ENCODE measurements at regions of chr3 and their contacts with region 1.

Region 1: DNA sequence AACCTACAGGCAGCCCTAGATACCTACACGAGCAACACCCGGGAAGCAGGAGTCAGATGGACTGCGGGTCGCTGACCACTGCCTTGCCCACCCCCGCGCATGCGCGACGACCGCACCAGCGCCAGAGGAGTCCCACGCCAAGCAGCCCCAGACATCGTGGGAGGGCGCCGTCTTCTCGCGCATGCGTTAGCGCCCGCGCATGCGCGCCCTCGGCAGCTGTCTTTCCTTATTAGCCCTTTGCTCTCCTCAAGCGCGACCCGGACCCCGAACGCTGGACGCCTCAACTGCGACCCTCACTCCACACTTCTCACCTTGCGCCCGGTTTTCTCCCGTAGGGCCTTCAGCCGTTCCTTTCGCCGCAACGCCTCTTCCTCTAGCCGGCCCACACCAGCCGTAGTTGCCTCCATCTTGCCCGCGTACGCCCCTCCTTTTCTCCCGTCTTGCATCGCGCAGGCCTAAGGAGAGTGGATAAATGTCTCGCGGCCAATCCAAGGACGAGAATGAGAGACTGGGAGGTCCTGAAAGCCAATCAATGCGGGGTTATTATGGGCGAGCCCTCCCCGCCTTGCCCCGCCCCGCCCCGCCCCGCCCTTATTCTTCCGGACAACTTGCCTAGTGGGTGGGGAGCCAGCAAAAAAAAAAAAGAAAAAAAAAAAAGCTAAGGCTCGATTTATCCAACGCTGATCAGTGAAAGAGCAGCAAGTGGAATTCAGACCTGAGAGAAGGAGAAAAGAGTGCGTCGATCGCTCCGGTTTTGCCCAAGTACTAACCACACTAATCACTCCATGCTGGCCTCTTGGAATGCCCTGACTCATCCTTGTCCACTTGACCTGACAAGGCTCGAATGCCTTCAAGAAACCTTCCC is at the start of gene CCDC12:
- DNase-seq: peak; percentile 94
- H3K4me3 Mint-ChIP-seq: peak within 1 kb of the TSS; percentile 97
- H3K27ac Mint-ChIP-seq: peak within 1 kb of the TSS; percentile 98
- H3K4me1 Mint-ChIP-seq: peaks cover 44% of the 10 kb centered on the region
- H3K27me3 Mint-ChIP-seq: no peaks in the 10 kb centered on the region
- total RNA-seq, gene CCDC12: 65.3 and 69.2 TPM in 2 replicates

Region 2: GRCh38 chr3:46959161-46959511 is 17.4 kb before region 1 on chr3:
- intact Hi-C with region 1: loop called (anchors 1 kb)
- DNase-seq: no peak
- H3K4me3 Mint-ChIP-seq: peak overlapping the region; percentile 40
- H3K27ac Mint-ChIP-seq: peak overlapping the region; percentile 89
- H3K4me1 Mint-ChIP-seq: peaks cover 74% of the 10 kb centered on the region
- H3K27me3 Mint-ChIP-seq: no peaks in the 10 kb centered on the region

Region 3: DNA sequence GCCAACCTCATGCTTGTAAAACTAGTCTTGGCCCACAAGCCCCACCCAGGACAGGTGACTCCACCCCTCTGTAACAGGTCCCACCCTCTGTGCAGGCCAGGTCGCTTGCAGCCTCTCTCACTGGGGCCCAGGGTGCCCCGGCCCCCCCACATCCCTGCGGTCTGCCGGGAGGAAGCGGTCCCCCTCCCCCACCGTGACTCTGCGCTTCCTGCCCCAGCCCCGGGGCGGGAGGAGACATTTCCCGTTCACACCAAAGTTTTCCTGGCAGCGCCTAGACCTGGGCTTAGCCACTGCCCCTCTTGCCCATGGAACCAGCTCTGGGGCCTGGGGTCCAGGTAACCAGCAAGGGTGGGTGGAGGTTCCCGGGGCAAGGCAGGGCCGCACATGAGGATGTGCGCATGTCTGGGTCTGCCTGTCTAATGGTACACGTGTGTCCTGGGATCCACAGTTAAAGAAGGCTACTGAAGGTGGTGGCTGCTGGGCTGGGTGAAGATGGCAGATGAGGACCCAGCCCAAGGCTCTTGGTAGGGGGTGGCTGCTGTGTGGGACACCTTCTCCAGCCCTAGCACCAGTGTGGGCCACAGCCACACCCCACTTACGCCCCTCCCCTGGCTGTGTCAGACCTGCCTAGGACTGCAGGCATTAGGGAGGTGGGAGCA is 11.3 kb after region 1 on chr3:
- intact Hi-C with region 1: loop called (anchors 1 kb)
- DNase-seq: peak; percentile 89
- H3K4me3 Mint-ChIP-seq: peak overlapping the region; percentile 77
- H3K27ac Mint-ChIP-seq: peak overlapping the region; percentile 94
- H3K4me1 Mint-ChIP-seq: peaks cover 56% of the 10 kb centered on the region
- H3K27me3 Mint-ChIP-seq: no peaks in the 10 kb centered on the region

Region 4: DNA sequence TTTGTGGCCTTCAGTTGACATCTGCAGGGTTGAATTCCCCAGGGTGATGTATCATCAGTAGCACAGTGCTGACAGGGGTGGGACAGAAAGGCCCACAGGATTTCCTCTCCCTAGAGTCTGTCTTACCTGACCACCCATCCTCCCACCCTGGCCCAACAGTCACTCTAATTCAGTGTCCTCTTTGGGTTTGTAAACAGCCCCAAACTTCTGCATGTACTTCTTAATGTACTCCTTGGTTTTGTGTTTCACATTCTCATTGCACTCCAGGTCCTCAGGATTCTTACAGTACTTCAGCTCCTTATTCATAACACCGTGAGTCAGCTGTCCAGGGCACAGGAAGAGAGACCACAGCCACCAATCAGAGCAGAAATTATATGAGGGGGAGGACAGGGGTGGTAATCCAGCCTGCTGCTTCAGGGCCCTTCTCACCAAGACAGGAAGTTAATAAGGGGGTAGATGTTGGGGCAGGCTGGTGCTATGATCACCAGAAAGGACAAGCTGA is 40.4 kb after region 1 on chr3:
- intact Hi-C with region 1: loop called (anchors 2 kb)
- DNase-seq: no peak
- H3K4me3 Mint-ChIP-seq: peak overlapping the region; percentile 13
- H3K27ac Mint-ChIP-seq: peak overlapping the region; percentile 75
- H3K4me1 Mint-ChIP-seq: peaks cover 38% of the 10 kb centered on the region
- H3K27me3 Mint-ChIP-seq: no peaks in the 10 kb centered on the region

Region 5: DNA sequence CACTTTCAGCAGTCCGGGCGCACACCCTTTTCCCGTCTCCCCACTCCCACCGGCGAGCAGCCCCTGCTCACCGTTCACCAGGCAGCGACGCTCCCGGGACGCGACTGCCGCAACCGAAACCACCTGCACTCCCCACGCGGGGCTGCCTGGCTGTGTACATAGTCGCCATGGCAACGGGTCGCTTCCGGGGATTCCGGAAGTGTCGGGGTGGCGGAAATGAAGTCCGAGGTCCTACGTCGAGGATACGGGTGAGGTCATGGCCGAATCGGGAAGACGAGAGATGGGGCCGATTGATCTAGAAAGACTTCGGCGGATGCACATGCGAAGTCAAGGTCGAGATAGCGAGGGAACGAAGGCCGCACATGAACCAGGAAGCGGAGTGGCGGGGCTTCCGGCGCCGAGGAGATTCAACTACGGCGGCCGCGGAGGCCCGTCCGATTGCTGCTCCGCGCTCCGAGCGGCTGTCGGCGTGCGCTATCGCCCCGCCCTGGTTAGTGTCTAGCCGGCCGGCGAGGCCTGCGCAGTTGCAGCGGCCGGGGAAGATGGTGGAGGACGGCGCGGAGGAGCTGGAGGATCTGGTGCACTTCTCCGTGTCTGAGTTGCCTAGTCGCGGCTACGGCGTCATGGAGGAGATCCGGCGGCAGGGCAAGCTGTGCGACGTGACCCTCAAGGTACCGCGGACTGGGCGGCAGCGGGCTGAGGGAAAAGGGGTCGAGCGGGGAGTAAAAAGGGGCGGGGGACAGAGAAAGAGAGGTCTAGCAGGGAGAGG is 306.1 kb after region 1 on chr3 and contains the starts of genes KIF9 and KLHL18:
- intact Hi-C with region 1: loop called (anchors 1 kb)
- DNase-seq: peak; percentile 95
- H3K4me3 Mint-ChIP-seq: peak within 1 kb of the TSS; percentile 98
- H3K27ac Mint-ChIP-seq: peak within 1 kb of the TSS; percentile 100
- H3K4me1 Mint-ChIP-seq: peaks cover 17% of the 10 kb centered on the region
- H3K27me3 Mint-ChIP-seq: no peaks in the 10 kb centered on the region
- total RNA-seq, gene KIF9: 3.5 and 4.4 TPM in 2 replicates
- total RNA-seq, gene KLHL18: 35.7 and 40.9 TPM in 2 replicates

Region 6: DNA sequence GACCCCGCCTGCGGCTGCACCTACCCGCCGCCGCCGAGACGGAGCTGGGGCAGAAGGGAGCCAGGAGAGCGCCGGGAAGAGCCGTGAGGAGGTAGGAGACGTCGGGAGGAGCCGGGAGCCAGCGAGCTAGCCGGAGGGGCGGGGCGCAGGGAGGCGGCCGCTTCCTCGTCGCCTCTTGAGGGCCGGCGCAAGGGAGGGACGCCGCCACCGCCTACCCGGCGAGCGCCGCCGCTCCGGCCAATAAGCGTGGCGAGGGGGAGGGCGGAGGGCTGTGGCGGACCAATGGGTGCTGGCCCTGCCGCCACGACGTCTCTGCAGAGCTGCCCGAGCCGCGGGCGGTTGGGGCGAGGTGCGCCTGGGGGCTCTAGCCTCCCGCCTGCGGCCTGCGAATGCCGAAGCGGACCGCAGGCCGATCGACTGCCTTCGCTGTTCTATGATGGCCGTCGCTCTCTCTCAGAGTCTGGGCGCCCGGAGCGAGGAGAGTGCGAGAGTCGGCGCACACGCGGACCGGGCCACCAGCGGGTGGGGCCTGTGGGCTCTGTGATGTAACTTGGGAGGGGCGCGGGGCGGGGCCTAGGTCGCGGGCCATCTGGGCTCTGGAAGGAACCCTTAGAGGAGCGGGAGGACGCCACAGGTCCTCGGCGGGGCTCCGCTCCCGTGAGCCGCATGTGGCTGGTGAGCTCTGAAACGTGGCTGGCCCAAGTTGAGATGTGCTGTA is 1112.3 kb after region 1 on chr3:
- intact Hi-C with region 1: loop called (anchors 5 kb)
- DNase-seq: peak; percentile 94
- H3K4me3 Mint-ChIP-seq: peak overlapping the region; percentile 97
- H3K27ac Mint-ChIP-seq: peak overlapping the region; percentile 97
- H3K4me1 Mint-ChIP-seq: peaks cover 21% of the 10 kb centered on the region
- H3K27me3 Mint-ChIP-seq: peaks cover 2% of the 10 kb centered on the region